B cell (primary cell): ENCODE measurements at regions of chr3 and their contacts with region 1.

Region 1: DNA sequence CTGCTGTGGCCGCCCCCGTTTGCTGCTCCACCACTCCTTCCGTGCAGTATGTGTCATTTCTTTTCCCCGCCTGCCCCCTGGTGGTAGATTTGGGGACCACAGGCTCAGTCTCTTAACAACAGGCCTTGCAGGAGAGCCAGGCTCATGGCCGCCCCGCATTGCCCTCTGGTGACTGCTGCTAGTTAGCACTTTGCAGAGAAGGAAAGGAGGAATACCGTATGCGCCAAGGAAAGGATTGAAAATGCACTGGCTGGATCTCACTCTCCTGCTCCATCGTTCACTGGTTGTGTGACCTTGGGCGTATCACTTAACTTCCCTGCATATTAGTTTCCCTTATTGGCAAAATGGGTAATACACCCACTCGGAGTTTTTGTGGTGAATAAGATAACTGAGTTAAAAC is 39.3 kb upstream of the PXYLP1 start:
- DNase-seq: peak; percentile 91
- ATAC-seq: peak; percentile 100
- H3K4me3 ChIP-seq: no peak overlapping the region
- H3K4me3 Mint-ChIP-seq: no peak overlapping the region
- H3K27ac ChIP-seq: no peak overlapping the region
- H3K27ac Mint-ChIP-seq: no peak overlapping the region
- H3K4me1 ChIP-seq: peaks cover 0 to 2% of the 10 kb centered on the region in 2 donors
- H3K4me1 Mint-ChIP-seq: peaks cover 7% of the 10 kb centered on the region
- H3K27me3 ChIP-seq: peaks cover 0 to 23% (median 15%) of the 10 kb centered on the region in 4 experiments
- H3K27me3 Mint-ChIP-seq: peaks cover 40% of the 10 kb centered on the region
- CTCF ChIP-seq: peak; percentile 96

Region 2: GRCh38 chr3:140898340-140899180 is 293.8 kb before region 1 on chr3:
- CTCF ChIA-PET with region 1: interaction called, 43 read pairs
- POLR2A ChIA-PET with region 1: no interaction called
- intact Hi-C with region 1: no loop called
- DNase-seq: peak; percentile 54
- ATAC-seq: peak; percentile 53
- H3K4me3 ChIP-seq: no peak overlapping the region
- H3K4me3 Mint-ChIP-seq: no peak overlapping the region
- H3K27ac ChIP-seq: no peak overlapping the region
- H3K27ac Mint-ChIP-seq: no peak overlapping the region
- H3K4me1 ChIP-seq: no peaks in the 10 kb centered on the region
- H3K4me1 Mint-ChIP-seq: no peaks in the 10 kb centered on the region
- H3K27me3 ChIP-seq: peaks cover 0 to 6% (median 2%) of the 10 kb centered on the region in 4 experiments
- H3K27me3 Mint-ChIP-seq: peaks cover 36% of the 10 kb centered on the region
- CTCF ChIP-seq: peak; percentile 76

Region 3: DNA sequence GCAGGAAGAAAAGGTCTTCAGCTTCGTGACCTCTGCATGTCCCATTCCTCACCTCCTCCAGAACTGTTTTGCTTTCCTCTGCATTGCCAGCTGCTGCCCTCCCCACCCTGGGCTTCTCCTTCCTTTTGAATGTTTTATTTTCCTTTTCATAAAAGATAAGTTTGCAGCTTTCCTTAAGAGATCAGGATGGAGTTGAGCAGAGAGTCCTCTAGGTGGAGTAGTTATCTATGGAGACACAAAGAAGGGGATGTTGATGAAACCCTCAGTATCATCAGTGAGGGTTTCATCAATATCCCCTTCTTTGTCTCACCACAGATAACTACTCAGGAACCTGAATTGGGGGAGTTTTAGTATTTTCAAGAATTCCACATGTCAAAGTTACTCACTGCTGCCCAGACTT is 269.7 kb before region 1 on chr3:
- CTCF ChIA-PET with region 1: interaction called, 3 read pairs
- POLR2A ChIA-PET with region 1: no interaction called
- intact Hi-C with region 1: loop called (anchors 1 kb)
- DNase-seq: peak; percentile 38
- ATAC-seq: peak; percentile 43
- H3K4me3 ChIP-seq: no peak overlapping the region
- H3K4me3 Mint-ChIP-seq: no peak overlapping the region
- H3K27ac ChIP-seq: no peak overlapping the region
- H3K27ac Mint-ChIP-seq: no peak overlapping the region
- H3K4me1 ChIP-seq: no peaks in the 10 kb centered on the region
- H3K4me1 Mint-ChIP-seq: no peaks in the 10 kb centered on the region
- H3K27me3 ChIP-seq: peaks cover 0 to 4% (median 2%) of the 10 kb centered on the region in 4 experiments
- H3K27me3 Mint-ChIP-seq: peaks cover 28% of the 10 kb centered on the region
- CTCF ChIP-seq: peak; percentile 41

Region 4: DNA sequence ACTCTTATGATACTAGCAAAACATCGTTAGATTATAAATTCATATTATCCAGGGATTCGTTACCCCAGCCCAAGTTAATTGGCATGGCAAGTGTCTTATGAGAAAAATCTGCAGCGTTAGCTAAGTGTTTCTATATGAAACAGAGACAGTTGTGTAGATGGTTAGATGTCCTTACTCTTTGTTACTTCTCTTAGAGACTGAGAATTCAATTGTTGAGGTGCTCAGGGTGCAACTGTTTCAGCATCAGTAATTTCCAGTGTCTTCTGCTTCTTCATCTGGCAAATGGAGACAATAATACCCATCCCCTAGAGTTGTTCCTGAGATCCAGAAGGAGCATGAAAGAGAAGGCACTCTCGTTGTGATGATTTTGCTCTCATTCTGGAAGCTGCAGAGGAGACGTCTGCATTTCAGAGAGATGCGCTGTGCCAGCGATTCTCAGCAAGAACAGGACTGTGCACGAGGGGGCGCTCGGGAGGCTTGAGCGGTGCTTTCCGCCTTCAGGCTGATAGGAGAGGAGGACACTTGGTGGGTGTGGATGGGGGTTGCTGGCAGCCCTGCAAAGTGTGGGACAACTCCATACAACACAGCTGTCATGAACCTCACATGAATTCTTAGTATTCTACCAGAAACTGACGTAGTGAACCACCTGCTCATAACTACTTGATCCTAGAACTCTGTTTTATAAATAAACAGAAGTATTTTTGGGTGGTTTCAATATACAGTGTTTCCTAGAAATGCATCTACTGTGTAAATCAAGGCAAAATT is 180.9 kb before region 1 on chr3:
- CTCF ChIA-PET with region 1: interaction called, 3 read pairs
- POLR2A ChIA-PET with region 1: no interaction called
- intact Hi-C with region 1: loop called (anchors 1 kb)
- DNase-seq: peak; percentile 52
- ATAC-seq: peak; percentile 43
- H3K4me3 ChIP-seq: no peak overlapping the region
- H3K4me3 Mint-ChIP-seq: no peak overlapping the region
- H3K27ac ChIP-seq: no peak overlapping the region
- H3K27ac Mint-ChIP-seq: no peak overlapping the region
- H3K4me1 ChIP-seq: no peaks in the 10 kb centered on the region
- H3K4me1 Mint-ChIP-seq: peaks cover 4% of the 10 kb centered on the region
- H3K27me3 ChIP-seq: peaks cover 0 to 4% (median 1%) of the 10 kb centered on the region in 4 experiments
- H3K27me3 Mint-ChIP-seq: peaks cover 54% of the 10 kb centered on the region
- CTCF ChIP-seq: peak; percentile 71

Region 5: DNA sequence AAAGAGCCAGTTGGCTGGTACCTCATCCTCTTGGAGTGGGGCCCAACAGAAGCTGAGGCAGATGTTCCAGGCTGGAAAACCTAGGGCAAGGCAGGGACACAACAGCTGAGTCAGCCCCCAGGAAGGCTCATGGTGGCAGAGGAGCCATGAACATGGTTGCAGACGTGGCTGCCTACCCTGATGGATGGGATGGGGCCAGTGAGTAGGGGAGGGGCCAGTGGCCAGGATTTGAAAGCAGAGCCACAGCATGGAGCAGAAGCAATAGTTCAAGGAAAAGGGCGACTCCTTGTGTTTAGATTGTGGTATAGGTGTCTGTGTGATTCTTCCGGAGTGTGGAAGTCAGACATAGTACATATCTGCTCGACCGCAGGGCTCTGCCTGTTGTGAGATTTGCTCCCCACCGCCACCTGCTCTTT is 63.5 kb after region 1 on chr3:
- CTCF ChIA-PET with region 1: no interaction called
- POLR2A ChIA-PET with region 1: no interaction called
- intact Hi-C with region 1: no loop called
- DNase-seq: no peak
- ATAC-seq: no peak
- H3K4me3 ChIP-seq: no peak overlapping the region
- H3K4me3 Mint-ChIP-seq: no peak overlapping the region
- H3K27ac ChIP-seq: no peak overlapping the region
- H3K27ac Mint-ChIP-seq: no peak overlapping the region
- H3K4me1 ChIP-seq: no peaks in the 10 kb centered on the region
- H3K4me1 Mint-ChIP-seq: no peaks in the 10 kb centered on the region
- H3K27me3 ChIP-seq: no peaks in the 10 kb centered on the region
- H3K27me3 Mint-ChIP-seq: no peaks in the 10 kb centered on the region
- CTCF ChIP-seq: no peak

Region 6: GRCh38 chr3:141894524-141895178 is 702.3 kb after region 1 on chr3:
- CTCF ChIA-PET with region 1: no interaction called
- POLR2A ChIA-PET with region 1: no interaction called
- intact Hi-C with region 1: no loop called
- DNase-seq: no peak
- ATAC-seq: no peak
- H3K4me3 ChIP-seq: no peak overlapping the region
- H3K4me3 Mint-ChIP-seq: no peak overlapping the region
- H3K27ac ChIP-seq: no peak overlapping the region
- H3K27ac Mint-ChIP-seq: no peak overlapping the region
- H3K4me1 ChIP-seq: no peaks in the 10 kb centered on the region
- H3K4me1 Mint-ChIP-seq: peaks cover 7% of the 10 kb centered on the region
- H3K27me3 ChIP-seq: no peaks in the 10 kb centered on the region
- H3K27me3 Mint-ChIP-seq: no peaks in the 10 kb centered on the region
- CTCF ChIP-seq: no peak